ENCODE measurements at regions of chr2 and their contacts with region 1.

Region 1: GRCh38 chr2:241702132-241703031 is 543 bp downstream of the ING5 start:
- DNase-seq: peak; percentile 82
- H3K4me3 Mint-ChIP-seq: peak overlapping the region; percentile 82
- H3K27ac Mint-ChIP-seq: peak overlapping the region; percentile 61
- H3K4me1 Mint-ChIP-seq: peaks cover 24% of the 10 kb centered on the region
- H3K27me3 Mint-ChIP-seq: no peaks in the 10 kb centered on the region

Region 2: GRCh38 chr2:240851078-240851991 is 851.0 kb before region 1 on chr2:
- CTCF ChIA-PET with region 1: no interaction called
- intact Hi-C with region 1: no loop called
- DNase-seq: peak; percentile 92
- H3K4me3 Mint-ChIP-seq: no peak overlapping the region
- H3K27ac Mint-ChIP-seq: no peak overlapping the region
- H3K4me1 Mint-ChIP-seq: no peaks in the 10 kb centered on the region
- H3K27me3 Mint-ChIP-seq: no peaks in the 10 kb centered on the region

Region 3: GRCh38 chr2:241355983-241356870 is 346.2 kb before region 1 on chr2 and contains the start of gene FARP2:
- CTCF ChIA-PET with region 1: interaction called, 3 read pairs
- intact Hi-C with region 1: loop called (anchors 1 kb)
- DNase-seq: peak; percentile 99
- H3K4me3 Mint-ChIP-seq: peak within 1 kb of the TSS; percentile 78
- H3K27ac Mint-ChIP-seq: peak within 1 kb of the TSS; percentile 76
- H3K4me1 Mint-ChIP-seq: peaks cover 27% of the 10 kb centered on the region
- H3K27me3 Mint-ChIP-seq: no peaks in the 10 kb centered on the region
- total RNA-seq, gene FARP2: 19.5 to 19.6 TPM

Region 4: DNA sequence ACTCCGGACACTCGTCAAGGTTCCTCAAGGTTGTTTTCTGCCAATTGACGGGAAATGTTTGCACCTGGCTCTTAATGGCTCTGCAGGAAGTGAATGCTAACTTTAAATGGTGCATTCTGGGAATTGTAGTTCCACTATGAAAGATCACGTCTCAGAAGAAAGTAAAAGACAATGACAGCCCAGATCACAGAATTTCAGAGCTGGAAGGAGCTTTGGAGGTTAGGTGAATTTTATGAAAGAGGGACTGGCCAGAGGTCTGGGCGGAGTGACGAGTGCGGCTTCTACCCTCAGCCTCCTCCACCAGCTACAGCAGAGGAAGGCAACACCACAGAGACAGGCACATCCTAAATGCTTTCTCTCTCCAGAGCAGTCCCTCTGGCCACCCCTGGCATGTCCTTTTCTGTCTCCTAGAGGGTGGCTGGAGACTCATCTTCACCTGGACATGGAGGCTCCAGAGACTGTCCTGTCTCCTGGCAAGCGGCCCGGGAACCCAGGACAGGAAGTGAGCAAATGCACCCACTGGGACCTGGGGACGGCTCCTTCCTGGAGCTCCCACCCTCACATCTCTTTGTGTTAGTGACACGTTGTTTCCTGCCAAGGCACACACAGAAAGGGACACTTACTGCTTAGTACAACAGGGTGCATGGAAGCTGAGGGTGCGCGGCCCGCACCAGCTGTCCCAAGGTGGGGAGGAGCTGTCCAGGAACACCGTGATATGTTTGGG is 84.8 kb before region 1 on chr2:
- CTCF ChIA-PET with region 1: no interaction called
- intact Hi-C with region 1: loop called (anchors 1 kb)
- DNase-seq: peak; percentile 61
- H3K4me3 Mint-ChIP-seq: peak overlapping the region; percentile 75
- H3K27ac Mint-ChIP-seq: peak overlapping the region; percentile 90
- H3K4me1 Mint-ChIP-seq: peaks cover 47% of the 10 kb centered on the region
- H3K27me3 Mint-ChIP-seq: no peaks in the 10 kb centered on the region

Region 5: DNA sequence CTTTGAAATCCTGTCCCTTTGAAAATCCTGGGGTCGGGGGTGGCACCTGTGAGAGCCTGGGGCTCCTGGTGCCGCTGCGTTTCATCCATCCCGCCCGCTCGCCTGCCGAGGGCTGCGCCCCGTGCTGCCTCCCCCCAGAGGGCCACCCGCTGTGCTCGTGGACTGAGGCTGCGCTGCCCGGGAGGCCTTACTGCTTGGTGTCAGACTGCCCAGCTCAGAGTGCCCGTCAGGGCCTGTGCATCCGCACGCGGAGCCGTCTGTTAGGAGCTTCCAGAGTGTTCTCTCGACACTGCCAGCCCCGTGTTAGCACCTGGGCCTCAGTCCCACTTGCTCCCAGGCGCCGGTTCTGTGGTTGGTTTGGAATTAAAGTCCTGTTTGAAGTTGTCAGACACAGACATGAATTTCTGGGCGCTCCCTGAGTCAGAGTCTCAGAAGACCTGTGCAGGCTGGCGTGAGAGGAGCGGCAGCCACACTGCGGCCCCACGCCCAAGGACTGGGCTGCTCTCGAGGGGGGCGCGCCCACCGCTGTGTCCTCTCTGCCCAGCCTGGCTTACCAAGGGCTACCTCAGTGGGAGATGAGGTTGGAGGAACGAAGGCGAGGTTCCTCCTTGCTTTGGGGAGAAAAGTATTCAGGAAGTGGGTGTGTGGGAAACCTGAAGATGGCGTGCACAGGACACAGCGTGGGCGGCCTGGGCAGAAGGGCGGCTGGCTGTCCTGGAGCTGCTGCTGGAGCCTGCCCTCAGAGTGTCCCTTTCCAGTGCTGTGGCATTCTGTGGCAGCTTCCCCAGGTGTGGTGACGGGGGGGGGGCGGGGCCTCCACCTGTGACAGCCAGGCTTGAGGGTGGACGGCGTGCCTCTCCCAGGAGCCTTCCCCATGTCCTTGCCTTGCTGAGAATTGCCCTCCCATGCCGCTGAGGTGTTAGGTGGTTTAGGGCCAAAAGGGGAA is 29.9 kb before region 1 on chr2:
- CTCF ChIA-PET with region 1: no interaction called
- intact Hi-C with region 1: no loop called
- DNase-seq: no peak
- H3K4me3 Mint-ChIP-seq: no peak overlapping the region
- H3K27ac Mint-ChIP-seq: no peak overlapping the region
- H3K4me1 Mint-ChIP-seq: no peaks in the 10 kb centered on the region
- H3K27me3 Mint-ChIP-seq: no peaks in the 10 kb centered on the region

Region 6: DNA sequence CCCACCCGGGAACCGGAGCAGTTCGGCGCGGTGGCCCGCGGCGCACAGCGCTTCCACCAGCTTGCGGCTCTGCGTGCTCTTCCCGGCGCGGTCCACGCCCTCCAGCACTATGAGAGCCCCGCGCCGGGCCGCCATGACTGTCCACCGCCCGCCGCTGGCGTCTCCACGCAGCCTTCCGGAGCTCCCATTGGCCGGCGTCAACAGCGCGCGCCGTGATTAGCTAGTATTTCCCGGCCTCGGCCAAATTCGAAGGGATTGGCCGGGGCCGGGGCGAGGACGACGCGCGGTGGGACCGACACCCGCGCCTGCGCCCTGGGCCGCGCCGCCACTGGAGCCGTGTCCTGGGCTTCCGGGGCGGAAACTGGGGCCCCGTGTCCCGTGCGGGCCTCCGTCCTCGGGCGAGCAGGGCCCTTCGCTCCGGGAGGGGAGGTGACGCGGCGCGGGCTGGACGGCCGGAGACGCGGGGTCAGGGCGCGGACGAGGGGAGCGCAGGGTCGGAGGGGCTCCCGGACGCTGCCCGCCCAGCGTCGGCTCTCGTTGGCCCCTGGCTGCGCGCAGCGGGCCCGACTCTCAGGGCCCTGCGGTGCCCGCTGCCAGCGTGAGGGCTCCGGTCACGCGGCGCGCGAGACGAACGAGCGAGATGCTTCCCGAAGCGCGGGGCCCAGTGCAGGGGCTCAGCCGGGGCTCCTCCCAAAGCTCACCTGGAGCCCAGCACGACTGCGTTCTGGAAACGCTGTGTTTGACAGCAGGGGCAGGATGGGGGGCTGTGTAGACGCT is 15.5 kb before region 1 on chr2 and contains the start of gene DTYMK:
- CTCF ChIA-PET with region 1: interaction called, 8 read pairs
- intact Hi-C with region 1: loop called (anchors 1 kb)
- DNase-seq: peak; percentile 97
- H3K4me3 Mint-ChIP-seq: peak within 1 kb of the TSS; percentile 99
- H3K27ac Mint-ChIP-seq: peak within 1 kb of the TSS; percentile 94
- H3K4me1 Mint-ChIP-seq: peaks cover 39% of the 10 kb centered on the region
- H3K27me3 Mint-ChIP-seq: no peaks in the 10 kb centered on the region
- total RNA-seq, gene DTYMK: 88.0 to 93.8 TPM

Region 7: GRCh38 chr2:241724259-241724974 is 22.0 kb after region 1 on chr2:
- CTCF ChIA-PET with region 1: no interaction called
- intact Hi-C with region 1: no loop called
- DNase-seq: peak; percentile 47
- H3K4me3 Mint-ChIP-seq: no peak overlapping the region
- H3K27ac Mint-ChIP-seq: no peak overlapping the region
- H3K4me1 Mint-ChIP-seq: peaks cover 2% of the 10 kb centered on the region
- H3K27me3 Mint-ChIP-seq: no peaks in the 10 kb centered on the region

Region 8: GRCh38 chr2:241734467-241735208 is 32.3 kb after region 1 on chr2 and contains the start of gene D2HGDH:
- CTCF ChIA-PET with region 1: interaction called, 17 read pairs
- intact Hi-C with region 1: loop called (anchors 1 kb)
- DNase-seq: peak; percentile 95
- H3K4me3 Mint-ChIP-seq: peak within 1 kb of the TSS; percentile 78
- H3K27ac Mint-ChIP-seq: no peak within 1 kb of the TSS
- H3K4me1 Mint-ChIP-seq: peaks cover 52% of the 10 kb centered on the region
- H3K27me3 Mint-ChIP-seq: no peaks in the 10 kb centered on the region
- total RNA-seq, gene D2HGDH: 19.4 to 23.1 TPM

Region 9: DNA sequence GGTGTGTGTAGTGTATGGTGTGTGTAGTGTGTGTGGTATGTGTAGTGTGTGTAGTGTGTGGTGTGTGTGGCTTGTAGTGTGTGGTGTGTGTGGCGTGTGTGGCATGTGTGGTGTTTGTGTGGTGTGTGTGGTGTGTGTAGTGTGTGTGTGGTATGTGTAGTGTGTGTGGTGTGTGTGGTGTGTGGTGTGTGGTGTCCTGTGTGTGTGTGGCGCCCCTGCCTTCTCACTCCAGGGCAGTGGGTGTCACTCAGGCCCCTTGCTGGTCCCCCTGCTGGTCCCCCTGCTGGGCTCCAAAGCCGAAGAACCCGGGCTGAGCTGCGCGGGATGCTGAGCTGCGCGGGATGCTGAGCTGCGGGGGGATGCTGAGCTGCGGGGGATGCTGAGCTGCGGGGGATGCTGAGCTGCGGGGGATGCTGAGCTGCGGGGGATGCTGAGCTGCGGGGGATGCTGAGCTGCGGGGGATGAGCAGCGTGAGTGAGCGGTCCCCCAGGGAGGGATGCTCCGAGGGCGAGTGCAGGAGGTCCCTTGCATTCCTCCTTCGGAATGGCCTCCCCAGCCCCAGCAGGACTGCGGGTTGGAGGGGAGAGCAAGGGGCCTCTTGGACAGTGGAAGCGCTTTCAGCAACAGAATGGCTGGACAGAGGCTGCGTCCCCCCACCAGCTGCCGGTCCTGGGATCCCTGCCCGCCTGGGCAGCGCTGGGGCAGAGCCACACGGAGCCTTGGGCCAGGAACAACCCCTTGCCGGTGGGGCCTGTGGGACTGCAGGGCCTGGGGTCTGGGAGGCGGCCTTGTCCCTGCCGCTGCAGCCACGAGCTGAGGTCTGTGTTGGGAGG is 163.8 kb after region 1 on chr2:
- CTCF ChIA-PET with region 1: interaction called, 13 read pairs
- intact Hi-C with region 1: no loop called
- DNase-seq: peak; percentile 63
- H3K4me3 Mint-ChIP-seq: no peak overlapping the region
- H3K27ac Mint-ChIP-seq: no peak overlapping the region
- H3K4me1 Mint-ChIP-seq: peaks cover 69% of the 10 kb centered on the region
- H3K27me3 Mint-ChIP-seq: peaks cover 14% of the 10 kb centered on the region

Measured in activated naive CD4-positive, alpha-beta T cell treated with anti-CD3 and anti-CD28 coated beads for 36 hours (primary cell).